ENCODE measurements at regions of chr2 and their contacts with region 1.

Region 1: DNA sequence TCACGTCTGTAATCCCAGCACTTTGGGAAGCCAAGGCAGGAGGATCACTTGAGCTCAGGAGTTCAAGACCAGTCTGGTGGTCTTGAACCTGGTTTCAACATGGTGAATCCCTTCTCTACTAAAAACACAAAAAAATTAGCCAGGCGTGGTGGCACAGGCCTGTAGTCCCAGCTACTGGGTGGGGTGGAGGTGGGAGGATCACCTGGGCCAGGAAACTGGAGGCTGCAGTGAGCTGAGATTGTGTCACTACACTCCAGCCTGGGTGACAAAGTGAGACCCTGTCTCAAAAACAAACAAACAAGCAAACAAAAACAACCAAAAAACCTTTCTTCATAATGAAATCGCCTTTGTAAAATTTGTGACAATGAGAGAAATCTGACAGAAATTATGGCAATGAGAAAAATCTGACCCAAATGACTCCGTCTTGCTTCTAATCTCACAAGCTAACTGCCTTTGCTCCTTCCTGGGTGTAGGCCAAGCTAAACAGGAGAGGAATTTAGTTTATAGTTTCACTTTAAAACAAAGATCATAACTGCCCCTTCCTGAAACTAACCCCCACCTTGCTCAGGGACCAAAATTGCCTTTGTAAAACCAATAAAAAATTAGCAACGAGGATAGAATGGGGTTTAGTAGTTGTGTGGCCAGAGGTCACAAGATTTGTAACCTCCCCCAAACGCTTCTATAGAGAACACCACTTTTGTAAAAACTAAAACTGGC is 60.7 kb upstream of the KIF5C start:
- DNase-seq: no peak
- ATAC-seq: no peak
- H3K4me3 Mint-ChIP-seq: no peak overlapping the region
- H3K27ac Mint-ChIP-seq: peak overlapping the region; percentile 95
- H3K4me1 Mint-ChIP-seq: peaks cover 64% of the 10 kb centered on the region
- H3K27me3 Mint-ChIP-seq: peaks cover 4% of the 10 kb centered on the region
- CTCF ChIP-seq: no peak

Region 2: DNA sequence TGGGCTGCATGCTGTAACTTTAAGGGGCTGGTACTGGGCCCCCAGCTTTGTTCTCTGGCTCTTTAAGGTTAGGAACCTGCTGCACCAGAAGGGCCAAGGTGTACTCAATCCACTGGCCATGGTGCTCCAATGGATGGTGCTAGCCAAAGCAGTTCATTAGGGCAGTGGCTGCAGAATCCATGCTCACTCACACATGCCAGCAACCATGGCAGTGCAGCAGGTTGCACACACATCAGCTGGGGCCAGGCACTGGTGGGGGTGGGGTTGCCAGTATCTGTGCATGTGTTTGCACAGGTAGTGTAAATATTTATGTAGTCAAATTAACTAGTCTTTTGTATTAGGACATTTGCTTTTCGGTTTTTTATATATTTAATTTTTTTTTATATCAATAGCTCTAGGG is 398.1 kb before region 1 on chr2:
- CTCF ChIA-PET with region 1: no interaction called
- POLR2A ChIA-PET with region 1: no interaction called
- DNase-seq: no peak
- ATAC-seq: no peak
- H3K4me3 Mint-ChIP-seq: no peak overlapping the region
- H3K27ac Mint-ChIP-seq: no peak overlapping the region
- H3K4me1 Mint-ChIP-seq: no peaks in the 10 kb centered on the region
- H3K27me3 Mint-ChIP-seq: no peaks in the 10 kb centered on the region; the same call in 1 of the 2 replicates
- CTCF ChIP-seq: no peak

Region 3: GRCh38 chr2:148674063-148675020 is 140.0 kb before region 1 on chr2:
- CTCF ChIA-PET with region 1: interaction called, 10 read pairs
- POLR2A ChIA-PET with region 1: no interaction called
- DNase-seq: peak; percentile 55
- ATAC-seq: peak; percentile 90
- H3K4me3 Mint-ChIP-seq: no peak overlapping the region
- H3K27ac Mint-ChIP-seq: peak overlapping the region; percentile 11
- H3K4me1 Mint-ChIP-seq: peaks cover 40% of the 10 kb centered on the region
- H3K27me3 Mint-ChIP-seq: no peaks in the 10 kb centered on the region
- CTCF ChIP-seq: peak; percentile 71

Region 4: GRCh38 chr2:149160701-149161217 is 346.5 kb after region 1 on chr2:
- CTCF ChIA-PET with region 1: no interaction called
- POLR2A ChIA-PET with region 1: no interaction called
- DNase-seq: no peak
- ATAC-seq: no peak
- H3K4me3 Mint-ChIP-seq: no peak overlapping the region
- H3K27ac Mint-ChIP-seq: no peak overlapping the region
- H3K4me1 Mint-ChIP-seq: peaks cover 45% of the 10 kb centered on the region
- H3K27me3 Mint-ChIP-seq: no peaks in the 10 kb centered on the region
- CTCF ChIP-seq: no peak